CD8-positive, alpha-beta T cell (primary cell): ENCODE measurements at regions of chr17 and their contacts with region 1.

Region 1: GRCh38 chr17:57440522-57441485 is 184.5 kb downstream of the MSI2 start:
- DNase-seq: peak; percentile 31 to 89 (median 63)
- ATAC-seq: peak; percentile 82
- H3K4me3 ChIP-seq: peak overlapping the region in 1 of 2 experiments; percentile 14
- H3K4me3 Mint-ChIP-seq: peak overlapping the region; percentile 8
- H3K27ac ChIP-seq: peak overlapping the region in 1 of 2 experiments; percentile 37
- H3K27ac Mint-ChIP-seq: peak overlapping the region; percentile 94
- H3K4me1 ChIP-seq: peaks cover 41% of the 10 kb centered on the region
- H3K4me1 Mint-ChIP-seq: peaks cover 72% of the 10 kb centered on the region
- H3K27me3 ChIP-seq: no peaks in the 10 kb centered on the region
- H3K27me3 Mint-ChIP-seq: no peaks in the 10 kb centered on the region
- CTCF ChIP-seq: peak; percentile 20

Region 2: DNA sequence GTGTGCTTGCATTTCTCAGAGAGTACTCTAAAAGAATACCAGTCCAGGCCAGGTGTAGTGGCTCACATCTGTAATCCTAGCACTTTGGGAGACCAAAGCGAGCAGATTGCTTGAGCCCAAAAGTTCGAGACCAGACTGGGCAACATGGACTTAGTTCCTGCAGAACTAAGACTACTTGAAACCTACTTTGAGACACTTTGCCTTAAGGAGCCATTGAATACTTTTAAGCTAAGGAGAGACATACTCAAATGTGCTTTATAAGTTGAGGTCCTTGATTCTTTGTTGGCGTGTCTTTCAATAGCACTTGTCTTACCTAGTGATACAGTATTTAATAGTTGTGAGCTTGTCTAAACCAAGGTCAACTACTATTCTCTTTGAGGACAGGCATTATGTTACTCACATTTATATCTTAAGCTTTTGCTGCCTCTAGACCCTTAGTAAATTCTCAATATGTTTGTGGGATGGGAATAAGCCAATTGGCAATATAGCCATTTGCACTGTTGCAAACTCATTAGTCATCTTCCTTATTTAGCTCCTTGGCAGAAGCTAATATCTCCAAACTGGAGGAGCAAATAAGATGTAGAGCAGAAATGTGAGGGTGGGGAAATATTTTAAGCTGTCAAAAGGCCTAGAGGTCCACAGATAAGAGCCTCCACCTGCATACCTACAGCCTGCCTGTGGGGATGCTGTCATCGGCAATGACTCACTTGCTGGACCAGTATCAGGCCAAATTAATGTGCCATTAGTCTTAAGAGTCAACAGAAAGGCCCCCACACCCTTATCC is 446.6 kb before region 1 on chr17:
- CTCF ChIA-PET with region 1: no interaction called
- POLR2A ChIA-PET with region 1: no interaction called
- intact Hi-C with region 1: no loop called
- DNase-seq: no peak
- ATAC-seq: no peak
- H3K4me3 ChIP-seq: no peak overlapping the region
- H3K4me3 Mint-ChIP-seq: no peak overlapping the region
- H3K27ac ChIP-seq: no peak overlapping the region
- H3K27ac Mint-ChIP-seq: no peak overlapping the region
- H3K4me1 ChIP-seq: no peaks in the 10 kb centered on the region
- H3K4me1 Mint-ChIP-seq: no peaks in the 10 kb centered on the region
- H3K27me3 ChIP-seq: no peaks in the 10 kb centered on the region
- H3K27me3 Mint-ChIP-seq: no peaks in the 10 kb centered on the region
- CTCF ChIP-seq: no peak

Region 3: DNA sequence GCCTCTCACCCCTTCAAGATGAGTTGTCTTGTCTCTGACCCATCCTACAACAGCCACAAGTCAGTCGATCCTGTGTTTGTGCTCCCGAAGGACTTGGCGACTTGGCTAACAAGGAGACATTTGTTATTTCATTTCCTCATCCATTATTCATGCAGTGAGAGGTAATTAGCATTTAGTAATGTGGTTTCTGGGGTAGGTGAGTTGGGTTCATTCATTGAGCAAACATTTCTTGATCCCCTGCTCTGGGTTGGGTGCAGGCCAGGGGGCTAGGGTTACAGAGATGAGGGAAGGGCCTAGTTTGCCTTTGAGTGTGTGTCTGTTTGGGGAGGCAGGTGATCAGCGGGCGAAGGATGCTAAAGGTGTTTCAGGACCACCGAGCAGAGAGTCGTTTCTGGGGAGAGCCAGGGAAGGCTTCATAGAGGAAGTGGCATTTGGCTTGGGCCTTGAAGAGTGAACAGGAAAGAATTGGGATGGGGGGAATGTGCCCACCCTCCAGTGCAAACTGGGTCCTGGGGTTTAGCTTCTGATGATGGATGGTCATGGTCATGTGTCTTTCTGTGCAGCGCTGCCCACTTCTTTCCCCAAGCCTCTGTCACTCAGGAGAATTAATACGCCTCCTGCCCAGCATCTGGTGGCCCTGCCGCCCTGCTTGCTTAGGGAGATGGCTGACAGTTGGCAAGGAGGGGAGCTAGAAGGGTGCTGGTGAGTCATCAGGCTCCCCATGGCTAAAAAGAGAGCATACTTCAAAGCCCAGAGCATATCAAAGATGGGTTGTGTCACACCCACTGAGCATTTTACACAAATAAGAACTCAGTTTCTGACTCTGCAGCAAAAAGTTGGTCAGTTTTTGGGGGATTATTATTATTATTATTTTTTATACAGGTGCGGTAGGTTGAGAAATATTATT is 145.9 kb before region 1 on chr17:
- CTCF ChIA-PET with region 1: no interaction called
- POLR2A ChIA-PET with region 1: no interaction called
- intact Hi-C with region 1: loop called in 1 of 2 experiments (anchors 10 kb)
- DNase-seq: peak in 8 of 9 experiments; percentile 39 to 69 (median 56)
- ATAC-seq: peak; percentile 95
- H3K4me3 ChIP-seq: no peak overlapping the region
- H3K4me3 Mint-ChIP-seq: peak overlapping the region; percentile 36
- H3K27ac ChIP-seq: no peak overlapping the region
- H3K27ac Mint-ChIP-seq: peak overlapping the region; percentile 83
- H3K4me1 ChIP-seq: peaks cover 20% of the 10 kb centered on the region
- H3K4me1 Mint-ChIP-seq: peaks cover 43% of the 10 kb centered on the region
- H3K27me3 ChIP-seq: no peaks in the 10 kb centered on the region
- H3K27me3 Mint-ChIP-seq: no peaks in the 10 kb centered on the region
- CTCF ChIP-seq: no peak

Region 4: GRCh38 chr17:57391076-57391825 is 49.6 kb before region 1 on chr17:
- CTCF ChIA-PET with region 1: no interaction called
- POLR2A ChIA-PET with region 1: no interaction called
- intact Hi-C with region 1: no loop called
- DNase-seq: no peak
- ATAC-seq: no peak
- H3K4me3 ChIP-seq: no peak overlapping the region
- H3K4me3 Mint-ChIP-seq: no peak overlapping the region
- H3K27ac ChIP-seq: no peak overlapping the region
- H3K27ac Mint-ChIP-seq: no peak overlapping the region
- H3K4me1 ChIP-seq: no peaks in the 10 kb centered on the region
- H3K4me1 Mint-ChIP-seq: peaks cover 18% of the 10 kb centered on the region
- H3K27me3 ChIP-seq: no peaks in the 10 kb centered on the region
- H3K27me3 Mint-ChIP-seq: no peaks in the 10 kb centered on the region
- CTCF ChIP-seq: no peak

Region 5: GRCh38 chr17:57455063-57455914 is 14.5 kb after region 1 on chr17:
- CTCF ChIA-PET with region 1: interaction called, 4 read pairs
- POLR2A ChIA-PET with region 1: interaction called, 8 read pairs
- intact Hi-C with region 1: loop called (anchors 1 to 2 kb)
- DNase-seq: peak in 8 of 9 experiments; percentile 9 to 72 (median 46)
- ATAC-seq: peak; percentile 78
- H3K4me3 ChIP-seq: peak overlapping the region in 1 of 2 experiments; percentile 3
- H3K4me3 Mint-ChIP-seq: peak overlapping the region; percentile 71
- H3K27ac ChIP-seq: peak overlapping the region in 1 of 2 experiments; percentile 38
- H3K27ac Mint-ChIP-seq: peak overlapping the region; percentile 89
- H3K4me1 ChIP-seq: peaks cover 46% of the 10 kb centered on the region
- H3K4me1 Mint-ChIP-seq: peaks cover 66% of the 10 kb centered on the region
- H3K27me3 ChIP-seq: no peaks in the 10 kb centered on the region
- H3K27me3 Mint-ChIP-seq: no peaks in the 10 kb centered on the region
- CTCF ChIP-seq: no peak